Activated CD4-positive, alpha-beta T cell treated with anti-CD3 and anti-CD28 coated beads for 36 hours (primary cell): ENCODE measurements at regions of chr3 and their contacts with region 1.

Region 1: GRCh38 chr3:157081681-157082210 is 78.2 kb downstream of the CCNL1 start:
- DNase-seq: peak; percentile 90
- ATAC-seq: peak; percentile 91
- H3K4me3 Mint-ChIP-seq: no peak overlapping the region
- H3K27ac Mint-ChIP-seq: peak overlapping the region; percentile 66
- H3K4me1 Mint-ChIP-seq: peaks cover 32% of the 10 kb centered on the region
- H3K27me3 Mint-ChIP-seq: no peaks in the 10 kb centered on the region

Region 2: DNA sequence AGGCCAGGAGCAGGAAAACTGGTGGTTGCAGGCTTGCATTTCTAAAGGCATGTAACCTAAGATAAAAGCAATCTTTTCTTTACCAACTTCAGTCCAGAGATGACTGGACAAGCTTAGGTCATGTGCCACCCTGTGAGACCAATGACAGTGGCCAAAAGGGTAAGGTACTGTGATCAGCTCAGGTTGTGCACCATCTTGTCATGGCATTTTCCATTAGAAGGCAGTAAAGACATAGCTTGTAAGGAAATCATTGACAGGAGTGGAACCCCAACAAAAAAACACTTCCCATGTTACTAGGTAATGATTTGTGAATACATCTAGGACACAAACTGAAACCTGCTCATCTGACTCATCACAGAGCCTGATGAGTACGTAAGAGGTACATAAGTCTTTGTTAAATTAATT is 562.0 kb before region 1 on chr3:
- CTCF ChIA-PET with region 1: interaction called, 3 read pairs
- POLR2A ChIA-PET with region 1: no interaction called
- intact Hi-C with region 1: loop called in 1 of 2 experiments (anchors 10 kb)
- DNase-seq: peak; percentile 26
- ATAC-seq: peak; percentile 82
- H3K4me3 Mint-ChIP-seq: no peak overlapping the region
- H3K27ac Mint-ChIP-seq: peak overlapping the region; percentile 3
- H3K4me1 Mint-ChIP-seq: peaks cover 21% of the 10 kb centered on the region
- H3K27me3 Mint-ChIP-seq: peaks cover 26% of the 10 kb centered on the region

Region 3: GRCh38 chr3:156816800-156817645 is 264.7 kb before region 1 on chr3:
- CTCF ChIA-PET with region 1: no interaction called
- POLR2A ChIA-PET with region 1: no interaction called
- intact Hi-C with region 1: loop called in 1 of 2 experiments (anchors 2 kb)
- DNase-seq: peak; percentile 92
- ATAC-seq: peak; percentile 83
- H3K4me3 Mint-ChIP-seq: peak overlapping the region; percentile 79
- H3K27ac Mint-ChIP-seq: peak overlapping the region; percentile 92
- H3K4me1 Mint-ChIP-seq: peaks cover 36% of the 10 kb centered on the region
- H3K27me3 Mint-ChIP-seq: no peaks in the 10 kb centered on the region

Region 4: GRCh38 chr3:156899951-156900350 is 181.8 kb before region 1 on chr3:
- CTCF ChIA-PET with region 1: no interaction called
- POLR2A ChIA-PET with region 1: no interaction called
- intact Hi-C with region 1: no loop called
- DNase-seq: no peak
- ATAC-seq: no peak
- H3K4me3 Mint-ChIP-seq: no peak overlapping the region
- H3K27ac Mint-ChIP-seq: no peak overlapping the region
- H3K4me1 Mint-ChIP-seq: no peaks in the 10 kb centered on the region
- H3K27me3 Mint-ChIP-seq: no peaks in the 10 kb centered on the region

Region 5: GRCh38 chr3:158488670-158489069 is 1406.9 kb after region 1 on chr3:
- CTCF ChIA-PET with region 1: no interaction called
- POLR2A ChIA-PET with region 1: no interaction called
- intact Hi-C with region 1: no loop called
- DNase-seq: no peak
- ATAC-seq: no peak
- H3K4me3 Mint-ChIP-seq: no peak overlapping the region
- H3K27ac Mint-ChIP-seq: no peak overlapping the region
- H3K4me1 Mint-ChIP-seq: no peaks in the 10 kb centered on the region
- H3K27me3 Mint-ChIP-seq: no peaks in the 10 kb centered on the region